Posterior cingulate gyrus (tissue), 11 donors: ENCODE measurements at regions of chrX and their contacts with region 1.

Region 1: GRCh38 chrX:1591102-1591900 is at the start of gene AKAP17A:
- DNase-seq: peak; percentile 94 to 100 (median 98)

Region 2: GRCh38 chrX:1391707-1392375 is 199.5 kb before region 1 on chrX and contains the start of gene SLC25A6:
- intact Hi-C with region 1: loop called (anchors 5 kb)
- DNase-seq: peak; percentile 97 to 100 (median 99)

Region 3: GRCh38 chrX:2498781-2499302 is 907.5 kb after region 1 on chrX:
- intact Hi-C with region 1: loop called (anchors 10 kb)
- DNase-seq: peak in 1 of 10 donors; percentile 62